Aorta (tissue), 5 donors: ENCODE measurements at regions of chr14 and their contacts with region 1.

Region 1: DNA sequence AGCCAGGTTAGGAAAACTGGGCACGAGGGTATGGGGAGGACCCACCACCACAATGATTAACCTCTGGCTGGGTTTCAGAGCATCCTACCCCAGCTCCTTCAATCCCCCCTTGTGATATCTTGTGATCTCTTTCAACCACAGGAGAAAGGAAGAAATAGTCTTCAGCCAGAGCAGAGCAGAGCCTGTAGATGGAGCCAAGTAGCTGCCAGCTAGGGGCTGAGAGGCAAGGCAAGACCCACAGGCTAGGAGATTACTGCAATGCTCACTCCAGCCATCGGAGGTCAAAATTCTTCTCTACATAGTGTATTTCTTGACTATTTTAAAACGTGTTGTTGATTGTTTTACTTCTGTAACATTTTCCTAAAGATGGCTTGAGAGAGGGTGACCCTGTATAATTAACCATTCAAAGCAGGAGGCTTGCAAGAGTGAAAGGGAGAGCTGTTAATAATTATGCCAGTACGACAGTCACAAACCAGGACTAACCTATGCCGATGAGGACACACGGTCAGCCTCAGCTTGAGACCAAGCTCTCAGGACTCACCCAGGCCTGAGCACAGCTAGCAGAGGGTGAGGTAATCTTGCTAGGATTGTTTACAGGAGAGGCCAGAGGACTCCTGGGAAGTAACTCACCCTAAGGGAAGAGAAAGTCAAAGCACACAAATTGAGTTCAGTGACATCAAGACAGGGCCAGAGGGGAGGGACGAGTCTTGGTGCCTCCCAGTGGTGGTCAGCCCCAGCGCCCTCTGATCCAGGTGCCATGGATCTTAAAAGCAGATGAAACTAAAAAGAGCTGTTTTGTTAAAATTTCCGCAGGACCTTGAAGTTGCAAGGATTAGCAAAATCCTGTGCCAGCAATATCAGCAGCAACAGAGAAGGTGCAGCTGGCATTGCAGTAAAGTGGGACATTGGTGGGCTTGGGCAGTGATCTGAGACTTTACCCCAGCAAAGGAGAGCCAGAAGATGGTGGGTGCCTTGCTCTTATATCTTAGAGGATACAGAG is 29.8 kb upstream of the CDKN3 start:
- DNase-seq: no peak
- ATAC-seq: peak; percentile 44
- H3K4me3 ChIP-seq: no peak overlapping the region
- H3K27ac ChIP-seq: no peak overlapping the region
- H3K4me1 ChIP-seq: peaks cover 0 to 2% of the 10 kb centered on the region in 2 donors
- H3K27me3 ChIP-seq: peaks cover 0 to 2% of the 10 kb centered on the region in 2 donors

Region 2: GRCh38 chr14:54440873-54441868 is 74.1 kb after region 1 on chr14 and contains the start of gene CNIH1:
- intact Hi-C with region 1: loop called in 1 of 2 experiments (anchors 5 kb)
- DNase-seq: peak; percentile 95 to 97
- ATAC-seq: peak; percentile 99
- H3K4me3 ChIP-seq: peak within 1 kb of the TSS; percentile 69 to 97
- H3K27ac ChIP-seq: peak within 1 kb of the TSS; percentile 83 to 98
- H3K4me1 ChIP-seq: peaks cover 0 to 6% of the 10 kb centered on the region in 2 donors
- H3K27me3 ChIP-seq: no peaks in the 10 kb centered on the region
- total RNA-seq, gene CNIH1: 83.3 to 91.4 TPM